ENCODE measurements at regions of chr1 and their contacts with region 1.

Region 1: DNA sequence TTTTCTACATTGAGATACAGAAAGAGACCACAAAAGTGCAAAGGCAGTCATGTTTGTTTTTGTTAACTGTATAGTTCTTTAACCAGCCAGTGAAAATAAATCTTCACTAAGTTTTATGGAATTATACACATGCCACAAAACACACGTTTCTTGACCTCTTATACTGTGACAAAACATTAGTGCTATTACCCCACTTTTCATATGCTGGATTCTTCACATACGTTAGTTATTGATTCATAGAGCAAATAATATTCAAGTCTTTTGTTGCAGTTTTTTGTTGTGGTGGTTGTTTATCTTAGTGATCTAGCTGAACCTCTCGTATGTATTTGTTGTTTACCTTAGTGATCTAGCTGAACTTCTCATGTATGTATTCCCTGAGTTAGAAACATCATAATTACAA is 28.0 kb downstream of the LYPLAL1 start:
- DNase-seq: no peak
- H3K4me3 ChIP-seq: no peak overlapping the region
- H3K27ac ChIP-seq: no peak overlapping the region
- H3K4me1 ChIP-seq: no peaks in the 10 kb centered on the region
- H3K27me3 ChIP-seq: no peaks in the 10 kb centered on the region
- CTCF ChIP-seq: no peak

Region 2: DNA sequence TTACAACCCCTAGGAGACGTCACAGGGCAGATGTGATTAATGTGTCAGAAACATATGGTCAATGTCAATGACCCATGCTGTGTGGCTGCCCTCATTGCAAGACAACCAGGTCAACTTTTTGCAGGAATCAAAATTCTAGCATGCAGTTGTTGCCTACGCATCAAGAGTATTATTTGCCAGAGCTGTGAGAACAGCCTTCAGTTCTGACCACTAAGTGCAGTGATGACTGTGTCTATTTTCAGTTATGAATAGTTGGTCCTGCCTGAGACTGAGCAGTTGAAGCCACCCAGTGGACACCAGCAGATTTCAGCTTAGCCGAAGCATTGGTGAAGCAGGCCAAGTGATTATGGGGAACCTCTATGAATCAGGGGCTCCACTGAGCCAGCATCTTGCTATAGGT is 19.3 kb after region 1 on chr1:
- CTCF ChIA-PET with region 1: no interaction called
- POLR2A ChIA-PET with region 1: no interaction called
- intact Hi-C with region 1: loop called (anchors 2 kb)
- DNase-seq: no peak
- H3K4me3 ChIP-seq: no peak overlapping the region
- H3K27ac ChIP-seq: no peak overlapping the region
- H3K4me1 ChIP-seq: no peaks in the 10 kb centered on the region
- H3K27me3 ChIP-seq: no peaks in the 10 kb centered on the region
- CTCF ChIP-seq: no peak